Esophagus muscularis mucosa (tissue), 4 donors: ENCODE measurements at regions of chr5 and their contacts with region 1.

Region 1: DNA sequence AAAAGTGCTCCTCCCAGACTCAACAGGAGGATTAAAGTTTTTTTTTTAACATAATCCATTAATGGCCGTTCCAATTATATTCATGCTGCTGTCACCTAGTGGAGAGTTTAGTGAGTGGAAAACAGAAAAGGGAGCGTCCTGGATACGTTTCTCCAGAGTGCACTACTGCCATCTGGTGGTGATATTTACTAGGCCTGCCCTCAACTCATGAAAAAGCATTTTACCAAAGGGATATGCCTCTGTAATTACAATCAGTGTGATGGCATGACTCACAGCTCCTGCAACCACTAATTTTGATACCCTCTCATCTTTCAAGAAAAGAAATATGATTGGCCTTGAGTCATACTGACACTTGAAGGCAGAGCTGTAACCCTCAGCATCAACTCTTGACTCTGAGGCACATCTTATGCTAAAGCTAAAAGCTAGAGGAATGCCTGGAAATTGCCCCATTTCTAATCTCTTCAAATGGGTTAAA is 20.0 kb downstream of the MINAR2 start:
- DNase-seq: no peak
- H3K4me3 ChIP-seq: no peak overlapping the region
- H3K27ac ChIP-seq: no peak overlapping the region
- H3K4me1 ChIP-seq: peaks cover 0 to 6% (median 0%) of the 10 kb centered on the region in 4 donors
- H3K27me3 ChIP-seq: no peaks in the 10 kb centered on the region
- CTCF ChIP-seq: peak in 2 of 3 experiments; percentile 94 to 99
- EP300 ChIP-seq: no peak
- POLR2A ChIP-seq: no peak

Region 2: DNA sequence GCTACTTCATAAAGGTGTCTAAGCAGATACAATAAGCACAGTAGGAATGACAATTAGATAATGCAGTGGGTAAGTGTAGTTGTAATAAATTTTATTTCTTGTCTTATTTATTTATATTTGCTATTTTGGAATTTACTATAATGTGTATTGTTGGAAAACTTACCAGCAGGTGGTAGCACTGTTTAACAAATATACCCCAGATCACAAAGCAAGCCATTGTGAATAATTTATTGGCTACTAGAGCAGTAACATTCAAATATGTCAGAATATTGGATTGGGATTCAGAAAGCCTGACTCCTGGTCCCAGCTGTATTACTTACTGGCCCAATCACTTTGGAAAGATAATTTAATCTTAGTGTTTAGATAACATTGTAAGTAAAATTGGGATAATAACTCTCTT is 595.4 kb before region 1 on chr5:
- intact Hi-C with region 1: loop called (anchors 5 kb)
- DNase-seq: no peak
- H3K4me3 ChIP-seq: no peak overlapping the region
- H3K27ac ChIP-seq: no peak overlapping the region
- H3K4me1 ChIP-seq: peaks cover 0 to 6% (median 2%) of the 10 kb centered on the region in 4 donors
- H3K27me3 ChIP-seq: no peaks in the 10 kb centered on the region
- CTCF ChIP-seq: peak in 2 of 3 experiments; percentile 15 to 17
- EP300 ChIP-seq: no peak
- POLR2A ChIP-seq: no peak

Region 3: DNA sequence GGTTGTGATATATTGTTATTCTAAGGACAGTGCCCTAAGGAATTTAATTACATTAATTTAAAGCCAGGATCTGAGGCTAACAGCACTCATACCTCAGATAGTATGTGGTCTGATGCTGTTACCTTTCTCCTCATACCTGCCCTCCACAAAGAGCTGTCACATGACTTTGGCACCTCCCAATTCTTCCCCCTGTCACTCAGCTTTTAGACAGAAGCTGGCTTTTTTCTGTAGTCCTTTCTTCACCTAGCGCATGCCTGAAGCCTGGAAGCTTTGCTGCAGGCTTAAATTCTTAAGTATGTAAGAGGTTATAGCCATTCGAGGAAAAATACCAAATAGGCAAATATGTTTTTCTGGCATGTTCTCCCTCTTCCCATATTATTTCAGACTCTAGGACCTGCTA is 368.9 kb before region 1 on chr5:
- intact Hi-C with region 1: loop called (anchors 5 kb)
- DNase-seq: no peak
- H3K4me3 ChIP-seq: no peak overlapping the region
- H3K27ac ChIP-seq: no peak overlapping the region
- H3K4me1 ChIP-seq: no peaks in the 10 kb centered on the region
- H3K27me3 ChIP-seq: no peaks in the 10 kb centered on the region
- CTCF ChIP-seq: no peak
- EP300 ChIP-seq: no peak
- POLR2A ChIP-seq: no peak

Region 4: GRCh38 chr5:129852747-129853352 is 84.9 kb after region 1 on chr5:
- intact Hi-C with region 1: loop called (anchors 2 kb)
- DNase-seq: no peak
- H3K4me3 ChIP-seq: no peak overlapping the region
- H3K27ac ChIP-seq: no peak overlapping the region
- H3K4me1 ChIP-seq: no peaks in the 10 kb centered on the region
- H3K27me3 ChIP-seq: no peaks in the 10 kb centered on the region
- CTCF ChIP-seq: peak; percentile 76 to 91 (median 86)
- EP300 ChIP-seq: no peak
- POLR2A ChIP-seq: no peak

Region 5: DNA sequence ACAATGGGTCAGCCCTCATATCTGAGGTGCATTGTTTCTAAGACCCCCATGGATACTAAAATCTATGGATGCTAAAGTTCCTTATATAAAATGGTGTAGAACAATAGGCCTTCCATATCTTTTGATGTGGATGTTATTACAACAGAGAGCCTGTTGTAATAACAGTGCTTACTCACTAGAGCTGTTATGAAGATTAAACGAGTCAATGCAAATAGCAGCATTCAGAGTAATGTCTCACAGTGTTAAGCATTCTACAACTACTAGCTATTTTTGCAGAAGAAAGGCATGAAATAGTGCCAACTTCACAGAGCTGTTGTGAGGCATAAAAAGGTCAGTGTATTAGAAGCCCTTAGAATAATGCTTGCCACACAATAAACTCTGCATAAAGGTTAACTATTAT is 149.3 kb after region 1 on chr5:
- intact Hi-C with region 1: no loop called
- DNase-seq: no peak
- H3K4me3 ChIP-seq: no peak overlapping the region
- H3K27ac ChIP-seq: no peak overlapping the region
- H3K4me1 ChIP-seq: no peaks in the 10 kb centered on the region
- H3K27me3 ChIP-seq: no peaks in the 10 kb centered on the region
- CTCF ChIP-seq: no peak
- EP300 ChIP-seq: no peak
- POLR2A ChIP-seq: no peak